ENCODE measurements at regions of chr5 and their contacts with region 1.

Region 1: GRCh38 chr5:55172051-55172899 is 702 bp downstream of the CDC20B start:
- DNase-seq: peak in 3 of 10 donors; percentile 31 to 67 (median 44)
- H3K4me3 ChIP-seq: peak overlapping the region in 58 of 59 donors; percentile 28 to 72 (median 54)
- H3K27ac ChIP-seq: no peak overlapping the region
- H3K27me3 ChIP-seq: peaks cover 0 to 96% (median 76%) of the 10 kb centered on the region in 45 donors
- CTCF ChIP-seq: peak; percentile 65 to 92 (median 83)

Region 2: DNA sequence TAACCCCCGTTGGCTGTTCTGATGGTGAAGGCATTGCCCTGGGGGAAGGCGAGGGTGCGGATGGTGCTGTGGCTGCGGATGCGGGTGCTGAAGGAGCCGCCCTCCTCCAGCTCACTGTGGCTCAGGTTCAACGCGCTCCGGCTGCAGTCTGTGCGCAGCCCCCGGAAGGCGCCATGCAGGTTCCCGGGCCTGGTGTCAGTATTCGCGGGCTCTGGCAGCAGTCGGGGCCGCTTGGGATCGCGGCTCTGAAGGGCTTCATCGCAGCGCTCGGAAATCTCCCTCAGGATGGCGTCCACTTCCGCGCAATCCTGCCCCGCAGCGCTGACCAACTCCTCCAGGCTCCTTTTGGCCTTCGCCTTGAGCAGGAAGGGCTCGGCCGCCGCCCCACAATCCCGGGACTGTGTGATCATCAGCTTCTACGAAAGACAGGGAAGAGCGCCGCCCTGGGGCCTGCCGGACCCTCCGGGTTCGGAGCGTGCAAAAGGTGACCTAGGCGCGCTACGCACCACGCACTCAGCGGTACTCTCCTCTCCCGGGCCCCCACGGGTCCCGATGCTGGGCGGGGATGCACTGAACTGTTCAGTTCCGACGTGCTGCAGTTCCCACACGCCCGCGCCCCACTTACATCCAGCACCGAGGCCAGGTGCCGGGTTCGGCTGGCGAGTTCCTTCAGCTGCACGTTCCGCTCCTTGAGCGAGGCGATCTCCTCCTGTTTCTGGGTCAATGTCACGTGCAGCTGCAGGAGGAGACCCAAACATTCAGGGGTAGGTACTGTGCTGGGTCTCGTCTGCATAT is 48.3 kb after region 1 on chr5:
- intact Hi-C with region 1: loop called in 1 of 2 experiments (anchors 5 kb)
- DNase-seq: peak in 1 of 10 donors; percentile 16
- H3K4me3 ChIP-seq: peak overlapping the region in 47 of 59 donors; percentile 4 to 63 (median 35)
- H3K27ac ChIP-seq: no peak overlapping the region
- H3K27me3 ChIP-seq: peaks cover 18 to 83% (median 62%) of the 10 kb centered on the region in 45 donors
- CTCF ChIP-seq: no peak

Region 3: GRCh38 chr5:55232985-55233928 is 61.0 kb after region 1 on chr5 and contains the start of gene CCNO:
- intact Hi-C with region 1: loop called in 1 of 2 experiments (anchors 10 kb)
- DNase-seq: peak in 8 of 10 donors; percentile 28 to 75 (median 68)
- H3K4me3 ChIP-seq: peak within 1 kb of the TSS; percentile 41 to 80 (median 64)
- H3K27ac ChIP-seq: peak within 1 kb of the TSS in 30 of 59 donors; percentile 5 to 83 (median 48)
- H3K27me3 ChIP-seq: peaks cover 0 to 80% (median 61%) of the 10 kb centered on the region in 45 donors
- CTCF ChIP-seq: no peak
- total RNA-seq, gene CCNO: 1.1 to 16.6 (median 7.4) TPM

Region 4: GRCh38 chr5:55307383-55308253 is 135.3 kb after region 1 on chr5 and contains the starts of genes DHX29 and MTREX:
- intact Hi-C with region 1: loop called in 1 of 2 experiments (anchors 10 kb)
- DNase-seq: peak; percentile 87 to 95 (median 92)
- H3K4me3 ChIP-seq: peak within 1 kb of the TSS; percentile 63 to 99 (median 92)
- H3K27ac ChIP-seq: peak within 1 kb of the TSS; percentile 88 to 99 (median 97)
- H3K27me3 ChIP-seq: no peaks in the 10 kb centered on the region
- CTCF ChIP-seq: peak in 24 of 56 donors; percentile 4 to 48 (median 22)
- total RNA-seq, gene DHX29: 16.1 to 29.4 (median 22.6) TPM
- total RNA-seq, gene MTREX: 52.1 to 86.7 (median 69.4) TPM

Region 5: DNA sequence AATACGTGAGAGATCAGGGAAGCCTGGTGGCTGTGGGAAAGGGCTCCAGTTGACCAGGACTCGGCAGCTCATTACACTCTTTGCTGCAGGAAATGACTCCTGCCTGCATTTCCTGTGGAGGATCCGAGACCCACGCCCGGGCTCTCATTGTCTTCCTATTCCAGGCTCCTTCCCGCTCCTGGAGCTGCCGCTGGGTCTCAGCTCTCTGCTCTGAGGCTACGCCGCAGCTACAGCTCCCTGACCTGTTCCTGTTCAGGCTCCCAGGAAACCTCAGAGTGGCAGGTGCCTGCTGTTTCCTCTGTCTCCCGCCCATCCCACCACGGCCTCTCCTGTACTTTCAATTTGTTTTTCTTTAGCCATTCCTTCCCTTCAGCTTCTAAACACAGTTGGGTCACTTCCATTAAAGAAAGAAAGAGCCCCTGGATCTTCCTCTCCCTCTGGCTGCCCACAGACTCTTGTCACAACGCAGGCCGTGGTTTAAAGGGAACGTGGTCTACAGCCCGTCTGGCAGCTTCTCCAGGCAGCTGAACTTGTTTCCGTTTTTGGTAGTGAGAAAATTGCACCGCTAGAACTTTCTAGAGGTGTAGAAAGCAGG is 751.0 kb after region 1 on chr5:
- intact Hi-C with region 1: loop called in 1 of 2 experiments (anchors 10 kb)
- DNase-seq: no peak
- H3K4me3 ChIP-seq: peak overlapping the region in 42 of 59 donors; percentile 1 to 55 (median 32)
- H3K27ac ChIP-seq: peak overlapping the region in 5 of 59 donors; percentile 21 to 44 (median 28)
- H3K27me3 ChIP-seq: peaks cover 0 to 5% (median 0%) of the 10 kb centered on the region in 45 donors
- CTCF ChIP-seq: no peak

Measured in dorsolateral prefrontal cortex (tissue), 120 donors.